Activated T-helper 2 cell treated with anti-CD3 and anti-CD28 coated beads, Interferon-gamma antibody, Interleukin-2, Interleukin-4, amounts not matched to agents 10 μg/mL and 5 μg/mL and 100 μg/mL, durations not matched to agents 14 hours and 24 hours and 36 hours (primary cell): ENCODE measurements at regions of chr22 and their contacts with region 1.

Region 1: GRCh38 chr22:43088979-43089717 is at the start of gene TTLL1:
- DNase-seq: peak; percentile 88
- H3K4me3 Mint-ChIP-seq: peak within 1 kb of the TSS; percentile 90
- H3K27ac Mint-ChIP-seq: peak within 1 kb of the TSS; percentile 91
- H3K4me1 Mint-ChIP-seq: peaks cover 24% of the 10 kb centered on the region
- H3K27me3 Mint-ChIP-seq: no peaks in the 10 kb centered on the region
- total RNA-seq, gene TTLL1: 3.4 and 4.1 TPM in 2 replicates

Region 2: DNA sequence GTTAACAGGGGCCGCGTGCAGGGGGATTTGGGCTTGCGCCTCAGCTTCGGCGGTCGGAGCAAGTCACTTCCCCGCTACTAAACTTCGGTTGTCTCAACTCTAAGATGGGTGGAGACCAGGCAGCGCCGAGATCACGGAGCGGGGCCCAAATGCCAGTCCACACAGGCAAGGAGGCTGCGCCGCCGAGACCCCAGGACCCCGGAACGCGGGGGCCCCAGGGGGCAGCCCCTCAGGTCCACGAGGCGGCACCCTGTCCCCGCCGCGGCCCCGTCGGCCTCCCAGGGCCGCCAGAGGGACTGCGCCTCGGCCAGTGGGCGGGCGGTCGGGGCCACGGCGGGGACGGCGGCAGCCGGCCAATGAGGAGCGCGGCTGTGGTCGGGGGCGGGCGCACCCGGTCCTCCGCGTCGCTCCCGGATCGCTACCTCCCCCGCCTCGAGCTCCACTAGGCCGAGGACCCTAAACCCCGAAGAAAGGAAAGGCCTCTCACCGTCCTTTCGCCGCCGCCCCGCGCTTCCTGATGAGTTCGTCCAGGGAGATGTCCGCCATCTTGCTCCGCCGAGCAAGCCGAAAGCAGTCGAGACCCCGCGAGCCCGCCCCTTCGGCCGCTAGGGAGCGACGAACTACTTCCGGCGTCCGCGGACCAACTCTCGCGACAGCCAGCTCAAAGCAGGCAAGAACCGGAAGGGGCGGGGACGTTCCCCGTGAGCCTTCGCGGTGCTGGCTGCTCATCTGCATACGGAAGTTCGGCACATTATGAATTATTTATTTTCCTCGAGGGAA is 474.6 kb before region 1 on chr22 and contains the start of gene POLDIP3:
- intact Hi-C with region 1: loop called (anchors 1 kb)
- DNase-seq: peak; percentile 97
- H3K4me3 Mint-ChIP-seq: peak within 1 kb of the TSS; percentile 95
- H3K27ac Mint-ChIP-seq: peak within 1 kb of the TSS; percentile 99
- H3K4me1 Mint-ChIP-seq: peaks cover 35% of the 10 kb centered on the region
- H3K27me3 Mint-ChIP-seq: no peaks in the 10 kb centered on the region
- total RNA-seq, gene POLDIP3: 74.7 and 80.7 TPM in 2 replicates

Region 3: GRCh38 chr22:42780070-42780540 is 309.0 kb before region 1 on chr22:
- intact Hi-C with region 1: loop called (anchors 1 kb)
- DNase-seq: peak; percentile 30
- H3K4me3 Mint-ChIP-seq: no peak overlapping the region
- H3K27ac Mint-ChIP-seq: no peak overlapping the region
- H3K4me1 Mint-ChIP-seq: peaks cover 1% of the 10 kb centered on the region
- H3K27me3 Mint-ChIP-seq: no peaks in the 10 kb centered on the region

Region 4: DNA sequence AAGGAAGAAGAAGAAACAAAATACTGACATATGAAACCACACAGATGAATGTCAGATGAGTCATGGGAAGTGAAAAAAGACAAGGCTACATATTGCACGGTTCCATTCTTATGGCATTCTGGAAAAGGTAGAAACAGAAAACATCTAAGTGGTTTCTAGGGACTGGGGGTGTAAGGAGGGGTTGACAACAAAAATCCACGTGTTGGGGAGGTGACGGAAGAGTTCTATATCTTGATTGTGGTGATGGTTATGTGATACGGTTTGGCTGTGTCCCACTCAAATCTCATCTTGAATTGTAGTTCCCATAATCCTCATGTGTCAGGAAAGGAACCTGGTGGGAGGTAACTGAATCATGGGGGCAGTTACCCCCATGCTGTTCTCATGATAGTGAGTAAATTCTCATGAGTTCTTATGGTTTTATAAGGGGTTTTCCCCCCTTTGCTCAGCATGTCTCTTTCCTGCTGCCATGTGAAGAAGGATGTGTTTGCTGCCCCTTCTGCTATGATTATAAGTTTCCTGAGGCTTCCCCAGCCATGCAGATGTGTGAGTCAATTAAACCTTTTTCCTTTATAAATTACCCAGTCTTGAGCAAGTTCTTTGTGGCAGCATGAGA is 225.7 kb before region 1 on chr22:
- intact Hi-C with region 1: loop called (anchors 2 kb)
- DNase-seq: no peak
- H3K4me3 Mint-ChIP-seq: no peak overlapping the region
- H3K27ac Mint-ChIP-seq: peak overlapping the region; percentile 78
- H3K4me1 Mint-ChIP-seq: peaks cover 16% of the 10 kb centered on the region
- H3K27me3 Mint-ChIP-seq: no peaks in the 10 kb centered on the region

Region 5: DNA sequence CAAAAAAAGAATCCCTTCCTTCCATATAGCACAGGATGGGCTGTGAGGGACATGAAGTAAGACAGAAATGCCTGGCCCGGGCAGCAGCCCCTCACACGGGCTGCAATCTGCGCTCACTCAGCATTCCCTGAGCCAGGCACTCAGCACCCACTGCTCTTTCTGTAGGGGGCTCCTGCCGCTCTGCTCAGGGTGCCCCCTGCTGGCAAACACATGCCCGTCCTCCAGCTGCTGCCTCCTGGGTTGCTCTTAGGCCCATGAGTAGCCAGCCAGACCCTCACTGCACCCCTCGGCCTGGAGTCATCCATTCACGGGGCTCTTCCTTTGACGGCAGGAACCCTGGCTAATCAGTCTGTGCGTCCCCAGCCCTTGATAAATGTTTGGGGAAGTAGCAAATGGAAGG is 47.1 kb after region 1 on chr22:
- intact Hi-C with region 1: loop called (anchors 5 kb)
- DNase-seq: no peak
- H3K4me3 Mint-ChIP-seq: no peak overlapping the region
- H3K27ac Mint-ChIP-seq: no peak overlapping the region
- H3K4me1 Mint-ChIP-seq: no peaks in the 10 kb centered on the region
- H3K27me3 Mint-ChIP-seq: no peaks in the 10 kb centered on the region

Region 6: GRCh38 chr22:43152357-43153071 is 63.4 kb after region 1 on chr22:
- intact Hi-C with region 1: no loop called
- DNase-seq: peak; percentile 38
- H3K4me3 Mint-ChIP-seq: peak overlapping the region; percentile 99
- H3K27ac Mint-ChIP-seq: peak overlapping the region; percentile 92
- H3K4me1 Mint-ChIP-seq: peaks cover 21% of the 10 kb centered on the region
- H3K27me3 Mint-ChIP-seq: no peaks in the 10 kb centered on the region

Region 7: GRCh38 chr22:43346521-43346929 is 257.4 kb after region 1 on chr22:
- intact Hi-C with region 1: no loop called
- DNase-seq: peak; percentile 56
- H3K4me3 Mint-ChIP-seq: no peak overlapping the region
- H3K27ac Mint-ChIP-seq: no peak overlapping the region
- H3K4me1 Mint-ChIP-seq: peaks cover 22% of the 10 kb centered on the region
- H3K27me3 Mint-ChIP-seq: peaks cover 24% of the 10 kb centered on the region